ENCODE measurements at regions of chr1 and their contacts with region 1.

Region 1: DNA sequence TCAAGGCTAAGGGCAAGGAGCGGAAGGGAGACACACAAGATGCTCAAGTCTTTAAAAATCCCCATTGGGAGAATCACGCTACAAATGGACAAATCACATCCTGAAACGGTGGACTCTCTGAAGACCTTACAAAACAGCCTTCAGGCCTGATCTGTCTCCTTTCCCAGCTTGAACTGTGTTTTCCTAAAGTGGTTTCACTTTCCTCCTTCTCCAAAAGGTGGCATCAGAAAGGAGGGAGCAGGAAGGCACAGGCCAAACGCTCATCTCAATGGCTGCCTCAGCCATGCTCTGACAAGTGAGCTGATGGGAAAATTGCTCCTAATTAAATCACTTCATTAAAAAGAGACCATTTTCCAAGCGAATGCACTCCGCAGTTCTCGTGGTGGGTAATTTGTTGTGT is 47.7 kb downstream of the UTP25 start:
- DNase-seq: no peak

Region 2: DNA sequence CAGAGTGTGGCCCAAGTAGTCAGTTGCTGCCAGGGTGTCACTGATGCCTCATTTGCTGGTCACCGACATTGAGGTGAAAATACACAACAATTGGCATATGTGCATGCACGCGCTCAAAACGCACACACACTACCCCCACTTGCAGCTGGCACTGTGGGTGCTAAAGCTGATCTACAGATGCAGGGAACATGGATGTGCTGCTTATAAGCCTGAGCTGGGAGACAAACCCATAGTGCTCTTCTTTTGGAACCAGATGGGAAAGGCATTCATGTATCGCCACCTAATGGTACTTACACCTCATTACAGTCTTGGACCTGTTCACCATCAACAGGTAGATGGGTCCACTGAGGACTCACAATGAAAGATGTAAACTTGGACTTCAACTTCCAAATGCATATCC is 362.3 kb before region 1 on chr1:
- intact Hi-C with region 1: no loop called
- DNase-seq: no peak

Region 3: DNA sequence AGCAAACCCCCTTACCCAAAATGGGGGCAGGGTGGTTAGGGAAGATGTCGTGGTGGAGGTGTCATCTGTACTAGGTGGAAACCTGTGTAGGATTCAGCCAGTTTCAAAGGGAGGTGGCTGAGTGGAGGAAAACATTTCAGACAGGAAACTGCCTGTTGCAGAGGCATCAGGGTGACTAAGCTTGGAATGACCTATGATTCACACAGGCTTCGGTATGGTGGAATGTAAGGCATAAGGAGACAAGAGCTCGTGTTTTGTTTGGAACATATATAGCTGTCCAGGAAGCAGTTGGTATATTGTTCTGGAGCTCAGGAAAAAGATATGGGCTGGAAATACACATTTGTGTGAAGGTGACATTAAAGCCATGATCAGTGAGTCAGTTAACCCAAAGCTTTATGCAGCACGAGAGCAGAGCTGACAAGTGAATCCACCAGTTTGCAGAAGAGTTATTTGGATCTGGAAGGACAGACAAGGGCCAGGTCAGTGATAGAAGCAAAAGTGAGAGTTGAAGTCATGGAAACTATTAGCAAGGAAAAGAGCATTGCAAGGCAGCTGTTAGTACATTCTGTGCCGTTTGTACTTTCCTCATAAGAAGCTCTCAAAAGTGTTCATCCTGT is 35.5 kb before region 1 on chr1:
- intact Hi-C with region 1: no loop called
- DNase-seq: no peak

Region 4: GRCh38 chr1:209899948-209900347 is 24.4 kb after region 1 on chr1:
- intact Hi-C with region 1: no loop called
- DNase-seq: no peak

Region 5: GRCh38 chr1:210822932-210823331 is 947.4 kb after region 1 on chr1:
- intact Hi-C with region 1: loop called in 1 of 2 experiments (anchors 5 kb)
- DNase-seq: no peak

Measured in posterior vena cava (tissue), 2 donors.